Mucosa of descending colon (tissue), 3 donors: ENCODE measurements at regions of chr2 and their contacts with region 1.

Region 1: GRCh38 chr2:157876066-157876787 is at the start of gene ACVR1:
- DNase-seq: peak; percentile 95 to 96 (median 95)
- ATAC-seq: peak; percentile 93
- H3K4me3 ChIP-seq: peak within 1 kb of the TSS; percentile 82
- H3K4me1 ChIP-seq: peaks cover 10% of the 10 kb centered on the region
- CTCF ChIP-seq: peak; percentile 24
- total RNA-seq, gene ACVR1: 14.7 to 38.4 (median 15.8) TPM

Region 2: DNA sequence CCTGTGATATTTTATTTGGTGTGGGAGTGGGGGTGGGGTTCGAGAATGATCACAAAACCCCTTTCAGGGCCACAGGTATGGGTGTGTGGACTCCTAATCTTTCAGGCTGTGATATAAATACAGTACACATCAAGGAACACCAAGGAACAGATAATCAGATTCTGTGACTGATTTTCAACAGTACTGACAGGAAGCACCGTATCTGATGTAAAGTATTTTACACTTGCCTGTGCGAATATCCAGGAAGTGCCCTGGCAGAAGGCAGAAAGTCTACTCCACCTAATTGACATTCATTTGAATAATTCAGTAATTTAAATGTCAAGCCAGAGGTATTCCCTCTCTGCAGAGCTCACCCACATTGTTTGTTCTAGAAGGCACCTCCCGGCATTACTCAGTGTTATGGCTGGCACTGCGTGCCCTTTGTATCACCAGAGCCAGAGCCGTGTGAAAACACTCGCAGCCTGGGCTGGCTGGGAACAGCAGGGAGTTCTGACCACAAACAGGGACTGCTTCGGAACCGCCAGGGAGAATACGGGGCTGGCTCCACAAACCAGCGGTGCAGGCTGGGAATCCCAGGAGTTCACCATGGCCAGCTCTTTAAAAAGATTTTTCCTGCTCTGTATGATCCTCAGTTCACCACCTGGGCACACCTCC is 91.9 kb before region 1 on chr2:
- intact Hi-C with region 1: loop called in 1 of 2 experiments (anchors 5 kb)
- DNase-seq: peak; percentile 75 to 81 (median 78)
- ATAC-seq: peak; percentile 97
- H3K4me3 ChIP-seq: no peak overlapping the region
- H3K4me1 ChIP-seq: peaks cover 30% of the 10 kb centered on the region
- CTCF ChIP-seq: no peak

Region 3: GRCh38 chr2:158337018-158337417 is 460.8 kb after region 1 on chr2:
- intact Hi-C with region 1: no loop called
- DNase-seq: no peak
- ATAC-seq: no peak
- H3K4me3 ChIP-seq: no peak overlapping the region
- H3K4me1 ChIP-seq: no peaks in the 10 kb centered on the region
- CTCF ChIP-seq: no peak